HepG2 (cell line): ENCODE measurements at regions of chr5 and their contacts with region 1.

Region 1: DNA sequence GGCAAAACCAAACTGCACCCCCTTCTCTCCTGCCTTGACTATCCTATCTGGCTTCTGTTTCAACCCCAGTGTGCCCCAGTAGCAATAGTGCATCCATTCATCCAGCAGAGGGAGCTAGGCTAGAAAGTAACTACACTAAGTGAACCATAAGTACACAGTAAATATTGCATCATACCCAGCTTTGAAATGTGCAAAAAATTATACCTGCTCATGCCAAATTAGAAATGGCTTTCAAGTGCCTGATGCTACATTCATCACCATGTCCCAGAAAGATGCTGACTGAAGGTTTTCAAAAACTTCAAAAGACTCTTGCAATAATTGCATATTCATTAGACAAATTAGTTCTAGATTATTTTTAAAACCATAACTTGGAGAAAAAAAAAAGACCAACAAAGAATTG is 153.5 kb downstream of the PRELID2 start:
- DNase-seq: peak; percentile 83
- ATAC-seq: peak; percentile 99
- H3K4me3 ChIP-seq: no peak overlapping the region; a peak in 1 of 6 replicates
- H3K27ac ChIP-seq: no peak overlapping the region
- H3K4me1 ChIP-seq: peaks cover 19% of the 10 kb centered on the region
- H3K27me3 ChIP-seq: no peaks in the 10 kb centered on the region
- CTCF ChIP-seq: peak; percentile 88
- EP300 ChIP-seq: peak; percentile 48 to 55; a peak in 2 of 4 replicates
- POLR2A ChIP-seq: no peak
- RAD21 ChIP-seq: peak; percentile 80

Region 2: DNA sequence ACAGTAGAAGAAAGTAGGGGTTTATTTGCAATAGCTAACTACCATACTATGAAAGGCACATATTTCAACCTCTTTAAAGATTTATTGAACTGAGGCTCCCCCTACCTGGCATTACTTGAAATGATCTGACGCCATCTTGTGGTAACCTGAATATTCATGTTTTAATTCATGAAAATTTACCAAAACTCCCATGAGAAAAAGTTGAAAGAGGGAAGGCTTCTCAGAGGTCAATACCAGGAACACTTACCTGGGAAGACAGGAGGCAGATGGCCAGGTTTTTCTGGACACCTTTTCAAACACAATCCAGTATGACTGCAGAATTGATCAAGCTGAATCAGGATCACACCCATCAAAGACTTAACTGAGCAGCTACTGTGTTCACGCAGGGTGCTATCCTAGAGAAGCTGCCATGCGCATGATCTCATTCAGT is 144.1 kb after region 1 on chr5:
- CTCF ChIA-PET with region 1: interaction called, 25 read pairs
- POLR2A ChIA-PET with region 1: no interaction called
- in situ Hi-C with region 1: no loop called
- intact Hi-C with region 1: loop called (anchors 1 kb)
- DNase-seq: peak; percentile 61
- ATAC-seq: peak; percentile 66
- H3K4me3 ChIP-seq: no peak overlapping the region
- H3K27ac ChIP-seq: no peak overlapping the region
- H3K4me1 ChIP-seq: peaks cover 25% of the 10 kb centered on the region
- H3K27me3 ChIP-seq: no peaks in the 10 kb centered on the region
- CTCF ChIP-seq: peak; percentile 72
- EP300 ChIP-seq: no peak
- POLR2A ChIP-seq: no peak
- RAD21 ChIP-seq: peak; percentile 33; the same call in 1 of the 2 replicates

Region 3: DNA sequence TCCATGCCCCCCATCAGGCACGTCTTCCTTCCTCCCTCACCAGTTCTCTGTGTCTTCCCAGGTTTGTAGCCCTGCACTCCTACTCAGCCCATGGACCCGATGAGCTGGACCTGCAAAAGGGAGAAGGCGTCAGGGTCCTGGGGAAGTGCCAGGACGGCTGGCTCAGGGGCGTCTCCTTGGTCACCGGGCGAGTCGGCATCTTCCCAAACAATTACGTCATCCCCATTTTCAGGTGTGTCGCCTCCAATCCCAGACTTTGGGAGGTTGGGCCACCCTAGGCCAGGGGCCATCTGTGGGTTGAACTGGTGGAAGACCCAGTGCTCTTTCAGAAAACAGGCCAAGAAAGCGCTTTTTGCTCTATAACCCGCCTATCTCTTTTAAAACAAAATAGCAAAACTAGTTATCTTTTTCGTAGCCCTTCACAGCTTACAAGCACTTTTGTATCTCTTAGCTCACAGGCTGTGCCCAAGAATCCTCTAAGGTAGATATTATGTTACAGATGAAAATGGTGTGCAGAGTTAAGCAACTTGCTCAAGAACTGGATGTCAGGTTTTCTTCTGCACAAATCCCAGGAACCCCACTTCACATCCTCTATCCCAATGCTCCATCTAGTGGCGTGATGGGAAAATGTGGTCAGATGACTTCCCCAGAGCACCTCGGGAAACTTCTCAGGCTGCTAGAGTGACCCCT is 367.5 kb after region 1 on chr5:
- CTCF ChIA-PET with region 1: interaction called, 5 read pairs
- POLR2A ChIA-PET with region 1: no interaction called
- in situ Hi-C with region 1: loop called (anchors 10 kb)
- intact Hi-C with region 1: loop called (anchors 1 kb)
- DNase-seq: peak; percentile 66
- ATAC-seq: peak; percentile 92
- H3K4me3 ChIP-seq: no peak overlapping the region
- H3K27ac ChIP-seq: no peak overlapping the region
- H3K4me1 ChIP-seq: no peaks in the 10 kb centered on the region
- H3K27me3 ChIP-seq: no peaks in the 10 kb centered on the region
- CTCF ChIP-seq: peak; percentile 83
- EP300 ChIP-seq: no peak
- POLR2A ChIP-seq: no peak
- RAD21 ChIP-seq: peak; percentile 84